ENCODE measurements at regions of chr1 and their contacts with region 1.

Region 1: GRCh38 chr1:11838349-11839272 is 9.0 kb downstream of the NPPA start:
- DNase-seq: no peak
- H3K4me3 ChIP-seq: no peak overlapping the region
- H3K27ac ChIP-seq: no peak overlapping the region
- H3K4me1 ChIP-seq: peaks cover 0 to 8% (median 3%) of the 10 kb centered on the region in 4 donors
- H3K27me3 ChIP-seq: no peaks in the 10 kb centered on the region
- CTCF ChIP-seq: peak; percentile 92 to 99 (median 98)
- EP300 ChIP-seq: no peak
- POLR2A ChIP-seq: no peak

Region 2: GRCh38 chr1:11893907-11894251 is 55.3 kb after region 1 on chr1:
- intact Hi-C with region 1: loop called (anchors 2 kb)
- DNase-seq: no peak
- H3K4me3 ChIP-seq: no peak overlapping the region
- H3K27ac ChIP-seq: no peak overlapping the region
- H3K4me1 ChIP-seq: peaks cover 0 to 9% (median 0%) of the 10 kb centered on the region in 4 donors
- H3K27me3 ChIP-seq: peaks cover 0 to 64% (median 10%) of the 10 kb centered on the region in 4 donors
- CTCF ChIP-seq: peak; percentile 65 to 85 (median 71)
- EP300 ChIP-seq: no peak
- POLR2A ChIP-seq: no peak

Region 3: DNA sequence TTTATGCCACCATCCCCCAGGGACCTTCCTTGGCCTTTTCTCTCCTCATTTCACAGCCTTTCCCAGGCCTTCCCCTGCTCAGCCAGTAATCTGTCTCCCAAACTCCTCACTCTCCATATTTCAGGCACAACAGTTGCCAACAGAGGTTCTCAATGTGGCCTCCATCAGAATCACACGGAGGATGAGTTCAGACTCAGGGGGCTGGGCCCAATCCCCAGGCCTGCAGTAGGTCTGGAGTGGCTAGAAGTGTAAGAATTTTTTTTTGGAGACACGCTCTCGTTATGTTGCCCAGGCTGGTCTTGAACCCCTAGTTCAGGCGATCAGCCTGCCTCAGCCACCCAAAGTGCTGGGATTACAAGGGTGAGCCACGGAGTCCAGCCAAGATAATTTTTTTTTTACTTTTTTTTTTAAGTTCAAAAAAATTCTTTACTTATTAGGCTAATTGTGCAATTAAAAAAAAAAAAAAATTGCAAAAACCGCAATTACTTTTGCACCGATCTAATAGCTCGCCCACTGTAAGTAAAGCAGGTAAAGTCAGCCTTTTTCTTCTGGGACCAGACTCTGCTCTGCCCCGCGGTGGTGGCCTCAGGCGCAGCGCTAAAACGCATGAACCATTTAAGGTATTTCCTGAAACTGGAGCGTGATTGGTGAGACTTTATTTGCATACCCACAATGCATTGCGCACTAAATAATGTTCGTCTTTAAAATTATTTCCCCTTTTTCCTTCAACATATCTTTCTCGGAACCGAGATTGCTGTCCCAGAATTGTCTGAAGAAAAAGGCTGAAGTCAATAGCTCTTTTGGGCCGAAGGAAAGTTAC is 68.9 kb after region 1 on chr1:
- intact Hi-C with region 1: loop called (anchors 1 kb)
- DNase-seq: peak; percentile 98
- H3K4me3 ChIP-seq: peak overlapping the region; percentile 61 to 76 (median 74)
- H3K27ac ChIP-seq: peak overlapping the region; percentile 95 to 99 (median 98)
- H3K4me1 ChIP-seq: peaks cover 0 to 4% (median 0%) of the 10 kb centered on the region in 4 donors
- H3K27me3 ChIP-seq: no peaks in the 10 kb centered on the region
- CTCF ChIP-seq: peak; percentile 87 to 99 (median 90)
- EP300 ChIP-seq: no peak
- POLR2A ChIP-seq: no peak

Region 4: DNA sequence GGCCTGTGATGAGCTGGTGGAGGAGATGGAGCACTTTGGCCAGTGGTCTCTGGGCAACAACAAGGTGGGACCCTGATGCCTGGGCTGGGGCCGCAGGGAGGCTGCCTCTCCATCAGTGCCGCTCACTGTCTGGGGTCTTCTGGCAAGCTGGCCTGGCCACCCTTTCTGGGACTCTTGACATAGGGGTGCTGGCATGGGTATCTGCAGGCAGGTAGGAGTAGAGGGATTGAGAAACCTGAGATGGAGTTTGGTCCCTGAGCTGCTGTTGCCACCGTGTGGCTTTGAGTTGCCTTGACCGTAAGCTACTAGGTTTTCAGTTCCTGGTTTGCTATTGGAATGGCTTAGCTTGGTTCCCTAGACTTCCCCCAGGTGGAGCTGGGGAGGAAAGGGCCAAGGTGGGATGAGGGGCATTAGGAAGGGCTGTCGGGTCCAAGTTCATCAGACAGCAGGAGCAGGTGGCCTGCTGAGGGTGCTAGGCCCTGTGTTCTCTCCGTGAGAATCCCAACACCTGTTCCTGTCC is 128.5 kb after region 1 on chr1:
- intact Hi-C with region 1: loop called (anchors 5 kb)
- DNase-seq: no peak
- H3K4me3 ChIP-seq: no peak overlapping the region
- H3K27ac ChIP-seq: no peak overlapping the region
- H3K4me1 ChIP-seq: no peaks in the 10 kb centered on the region
- H3K27me3 ChIP-seq: no peaks in the 10 kb centered on the region
- CTCF ChIP-seq: peak in 2 of 3 experiments; percentile 14 to 48
- EP300 ChIP-seq: no peak
- POLR2A ChIP-seq: no peak

Region 5: GRCh38 chr1:12031039-12031980 is 192.7 kb after region 1 on chr1:
- intact Hi-C with region 1: loop called (anchors 5 kb)
- DNase-seq: no peak
- H3K4me3 ChIP-seq: no peak overlapping the region
- H3K27ac ChIP-seq: no peak overlapping the region
- H3K4me1 ChIP-seq: peaks cover 0 to 4% (median 0%) of the 10 kb centered on the region in 4 donors
- H3K27me3 ChIP-seq: no peaks in the 10 kb centered on the region
- CTCF ChIP-seq: peak; percentile 34 to 64 (median 49)
- EP300 ChIP-seq: no peak
- POLR2A ChIP-seq: no peak

Measured in esophagus muscularis mucosa (tissue), 4 donors.